CD4-positive, alpha-beta memory T cell (primary cell): ENCODE measurements at regions of chr7 and their contacts with region 1.

Region 1: DNA sequence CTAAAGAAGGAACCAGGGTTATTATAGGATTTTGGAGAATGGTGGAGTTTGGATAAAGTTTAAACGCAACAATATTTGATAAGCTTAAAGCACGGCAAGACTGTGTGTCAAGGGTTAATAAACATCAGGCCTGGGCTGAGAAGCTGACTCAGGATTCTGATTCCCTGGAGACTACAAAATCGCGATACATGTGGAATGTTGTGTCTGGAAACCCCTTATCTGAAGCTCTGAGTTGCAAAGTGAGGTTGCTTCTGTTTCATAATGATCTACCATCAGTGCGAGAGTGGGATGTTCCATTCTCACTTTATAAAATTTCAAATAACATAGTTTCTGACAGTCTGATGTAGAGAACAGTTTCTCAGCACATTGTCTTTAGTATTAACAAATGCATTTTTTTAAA is 7.8 kb downstream of the C1GALT1 start:
- DNase-seq: no peak
- H3K4me3 ChIP-seq: no peak overlapping the region
- H3K4me3 Mint-ChIP-seq: peak overlapping the region in 1 of 8 donors; percentile 9
- H3K27ac ChIP-seq: no peak overlapping the region
- H3K27ac Mint-ChIP-seq: peak overlapping the region in 2 of 7 donors; percentile 24 to 28
- H3K4me1 ChIP-seq: peaks cover 81% of the 10 kb centered on the region
- H3K4me1 Mint-ChIP-seq: peaks cover 43 to 48% (median 47%) of the 10 kb centered on the region in 4 donors
- H3K27me3 ChIP-seq: no peaks in the 10 kb centered on the region
- H3K27me3 Mint-ChIP-seq: no peaks in the 10 kb centered on the region

Region 2: GRCh38 chr7:7201578-7202374 is 11.6 kb after region 1 on chr7:
- CTCF ChIA-PET with region 1: interaction called, 3 read pairs
- POLR2A ChIA-PET with region 1: interaction called, 4 read pairs
- intact Hi-C with region 1: loop called (anchors 1 kb)
- DNase-seq: peak; percentile 47 to 59 (median 56)
- H3K4me3 ChIP-seq: no peak overlapping the region
- H3K4me3 Mint-ChIP-seq: peak overlapping the region; percentile 38 to 87 (median 76)
- H3K27ac ChIP-seq: peak overlapping the region; percentile 41
- H3K27ac Mint-ChIP-seq: peak overlapping the region; percentile 65 to 93 (median 90)
- H3K4me1 ChIP-seq: peaks cover 44% of the 10 kb centered on the region
- H3K4me1 Mint-ChIP-seq: peaks cover 63 to 90% (median 79%) of the 10 kb centered on the region in 4 donors
- H3K27me3 ChIP-seq: no peaks in the 10 kb centered on the region
- H3K27me3 Mint-ChIP-seq: no peaks in the 10 kb centered on the region